Adrenal gland (tissue), 19 donors: ENCODE measurements at regions of chr3 and their contacts with region 1.

Region 1: DNA sequence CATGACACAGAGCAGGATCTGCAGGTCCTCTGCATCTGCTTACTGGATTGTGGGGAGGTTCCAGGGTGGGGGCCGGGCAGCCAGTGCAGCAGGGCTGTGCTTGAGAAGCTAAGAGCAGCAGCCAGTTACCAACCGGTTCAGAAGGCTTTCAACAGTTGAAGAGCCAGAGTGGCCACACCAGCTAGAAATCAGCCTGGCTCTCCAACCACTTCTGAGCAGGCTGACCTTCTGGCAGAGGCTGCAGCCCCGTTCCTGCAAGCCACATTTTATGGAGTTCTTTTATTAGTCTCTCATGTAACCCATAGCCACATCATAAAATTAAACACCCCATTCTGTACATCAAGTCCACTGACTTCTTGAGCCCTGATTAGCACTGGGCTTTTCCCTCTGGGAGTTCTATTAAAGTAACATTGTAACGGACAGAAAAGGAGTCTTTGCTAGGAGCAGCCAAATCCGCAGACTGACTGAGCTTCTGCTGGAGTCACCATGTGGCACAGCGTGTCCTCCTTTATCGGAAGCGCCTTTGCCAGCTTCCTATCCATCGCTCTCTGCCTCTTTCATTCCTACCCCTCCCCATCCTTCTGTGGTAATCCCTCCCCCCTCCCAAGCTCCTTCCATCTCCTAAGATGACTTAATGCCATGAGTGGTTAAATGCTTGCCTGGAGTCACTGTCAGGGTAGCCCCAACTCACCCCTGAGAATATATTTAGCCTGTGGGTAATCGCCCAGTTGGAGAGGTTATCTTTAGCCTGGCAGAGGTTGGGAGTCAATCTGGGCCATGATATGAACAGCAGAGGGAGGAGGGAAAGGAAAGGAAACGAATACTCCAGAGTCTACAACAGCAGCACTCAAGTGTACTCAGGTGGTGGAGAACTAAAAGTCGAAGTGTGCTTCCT is 138.5 kb upstream of the HES1 start:
- DNase-seq: no peak
- H3K4me3 ChIP-seq: no peak overlapping the region
- H3K27ac ChIP-seq: no peak overlapping the region
- H3K4me1 ChIP-seq: peaks cover 2% of the 10 kb centered on the region in 2 donors
- H3K27me3 ChIP-seq: no peaks in the 10 kb centered on the region
- CTCF ChIP-seq: no peak
- POLR2A ChIP-seq: no peak

Region 2: DNA sequence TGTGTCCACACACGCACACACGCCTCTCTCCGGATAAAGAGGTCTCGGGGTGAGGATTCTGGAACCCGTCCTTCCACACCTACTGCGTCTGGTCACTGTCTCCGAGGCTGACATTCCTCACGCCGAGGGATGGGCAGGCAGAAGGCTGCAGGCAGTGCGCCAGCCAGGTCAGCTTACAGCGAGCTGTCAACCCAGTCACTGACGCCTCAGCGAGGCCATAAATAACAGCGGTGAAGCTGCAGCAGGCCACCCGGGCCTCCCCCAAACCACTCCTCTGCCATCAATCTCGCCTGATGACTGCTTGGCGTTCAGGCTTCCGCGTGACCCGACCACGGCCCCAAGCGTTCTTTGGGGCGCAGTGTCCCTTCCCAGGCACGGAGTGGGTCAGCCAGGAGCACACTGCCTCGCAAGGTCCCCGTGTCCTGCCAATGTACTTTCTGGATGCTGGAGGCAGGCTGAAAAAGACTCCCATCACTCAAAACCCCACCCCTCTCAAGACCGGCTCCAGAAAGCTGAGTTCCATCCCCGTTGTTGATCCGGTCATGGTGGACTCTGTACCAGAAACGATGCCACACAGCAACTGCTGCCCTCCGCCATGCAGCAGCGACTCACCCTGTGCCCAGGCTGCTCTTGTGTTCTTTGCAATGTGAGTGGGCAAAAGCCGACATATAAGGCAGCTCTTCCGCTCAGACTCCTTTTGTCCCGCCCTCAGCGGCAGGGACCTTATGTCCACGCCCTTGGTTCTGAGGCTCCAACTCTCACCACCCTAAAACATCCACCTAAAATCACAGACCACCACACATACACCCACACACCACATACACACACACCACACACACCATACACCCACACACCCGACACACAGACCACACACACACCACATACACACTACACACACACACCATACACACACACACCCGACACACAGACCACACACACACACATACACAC is 326.6 kb after region 1 on chr3:
- intact Hi-C with region 1: loop called in 1 of 2 experiments (anchors 10 kb)
- DNase-seq: peak; percentile 38 to 82 (median 63)
- H3K4me3 ChIP-seq: peak overlapping the region in 1 of 4 donors; percentile 50
- H3K27ac ChIP-seq: peak overlapping the region in 1 of 5 donors; percentile 34
- H3K4me1 ChIP-seq: peaks cover 7 to 9% of the 10 kb centered on the region in 2 donors
- H3K27me3 ChIP-seq: no peaks in the 10 kb centered on the region
- CTCF ChIP-seq: no peak
- POLR2A ChIP-seq: no peak